Activated naive CD8-positive, alpha-beta T cell treated with anti-CD3 and anti-CD28 coated beads, Interleukin-2, amount 10 ng/mL, durations not matched to agents 7 days and 5 days (primary cell): ENCODE measurements at regions of chr7 and their contacts with region 1.

Region 1: GRCh38 chr7:100705753-100706671 is at the start of gene POP7:
- DNase-seq: peak; percentile 99
- ATAC-seq: peak; percentile 94
- H3K4me3 Mint-ChIP-seq: peak within 1 kb of the TSS; percentile 99
- H3K27ac Mint-ChIP-seq: peak within 1 kb of the TSS; percentile 98
- H3K4me1 Mint-ChIP-seq: peaks cover 10% of the 10 kb centered on the region
- H3K27me3 Mint-ChIP-seq: peaks cover 2% of the 10 kb centered on the region
- total RNA-seq, gene POP7: 29.6 to 32.8 TPM

Region 2: DNA sequence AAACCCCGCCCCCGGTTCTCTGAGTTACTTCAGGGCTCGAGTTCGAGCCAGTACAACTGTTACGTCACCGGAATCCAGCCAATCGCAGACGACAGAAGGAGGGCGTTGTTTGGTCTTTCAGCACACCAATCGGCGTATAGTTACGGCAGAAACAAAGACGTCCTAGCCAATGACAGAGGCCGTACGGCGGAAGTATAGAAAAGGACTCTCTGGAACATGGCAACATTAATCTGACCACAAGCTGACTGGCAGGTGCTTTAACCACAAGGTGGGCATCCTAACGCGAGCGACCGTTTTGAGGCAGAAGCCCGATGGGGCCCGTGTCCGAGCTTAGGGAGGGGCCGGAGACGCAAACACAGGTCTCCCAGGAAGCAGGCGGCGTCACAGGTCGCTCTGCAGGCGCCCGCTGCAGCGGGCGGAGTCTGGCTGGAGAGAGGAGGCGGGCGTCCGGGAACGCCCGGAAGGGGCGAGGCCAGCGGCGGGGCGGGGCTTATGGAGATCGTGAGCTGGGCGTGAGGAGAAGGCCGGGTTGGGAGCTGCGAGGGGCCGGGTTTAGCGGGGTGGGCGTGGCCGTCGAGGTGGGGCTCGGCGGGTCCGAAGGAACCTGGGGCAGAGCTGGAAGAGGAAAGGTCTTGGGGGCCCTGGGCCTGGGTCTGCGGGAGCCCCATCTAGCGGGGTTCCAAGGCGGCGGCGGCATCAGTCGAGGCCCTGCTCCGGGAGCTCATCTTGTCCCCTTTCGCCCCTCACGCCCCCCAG is 93.9 kb before region 1 on chr7 and contains the start of gene MOSPD3:
- POLR2A ChIA-PET with region 1: interaction called, 19 read pairs
- DNase-seq: peak; percentile 100
- ATAC-seq: peak; percentile 93
- H3K4me3 Mint-ChIP-seq: peak within 1 kb of the TSS; percentile 98
- H3K27ac Mint-ChIP-seq: peak within 1 kb of the TSS; percentile 100
- H3K4me1 Mint-ChIP-seq: peaks cover 19% of the 10 kb centered on the region
- H3K27me3 Mint-ChIP-seq: peaks cover 7% of the 10 kb centered on the region
- total RNA-seq, gene MOSPD3: 27.4 TPM

Region 3: GRCh38 chr7:100632951-100633717 is 72.9 kb before region 1 on chr7:
- POLR2A ChIA-PET with region 1: interaction called, 13 read pairs
- DNase-seq: peak; percentile 73
- ATAC-seq: peak; percentile 71
- H3K4me3 Mint-ChIP-seq: peak overlapping the region; percentile 87
- H3K27ac Mint-ChIP-seq: peak overlapping the region; percentile 87
- H3K4me1 Mint-ChIP-seq: peaks cover 31% of the 10 kb centered on the region
- H3K27me3 Mint-ChIP-seq: peaks cover 12% of the 10 kb centered on the region

Region 4: DNA sequence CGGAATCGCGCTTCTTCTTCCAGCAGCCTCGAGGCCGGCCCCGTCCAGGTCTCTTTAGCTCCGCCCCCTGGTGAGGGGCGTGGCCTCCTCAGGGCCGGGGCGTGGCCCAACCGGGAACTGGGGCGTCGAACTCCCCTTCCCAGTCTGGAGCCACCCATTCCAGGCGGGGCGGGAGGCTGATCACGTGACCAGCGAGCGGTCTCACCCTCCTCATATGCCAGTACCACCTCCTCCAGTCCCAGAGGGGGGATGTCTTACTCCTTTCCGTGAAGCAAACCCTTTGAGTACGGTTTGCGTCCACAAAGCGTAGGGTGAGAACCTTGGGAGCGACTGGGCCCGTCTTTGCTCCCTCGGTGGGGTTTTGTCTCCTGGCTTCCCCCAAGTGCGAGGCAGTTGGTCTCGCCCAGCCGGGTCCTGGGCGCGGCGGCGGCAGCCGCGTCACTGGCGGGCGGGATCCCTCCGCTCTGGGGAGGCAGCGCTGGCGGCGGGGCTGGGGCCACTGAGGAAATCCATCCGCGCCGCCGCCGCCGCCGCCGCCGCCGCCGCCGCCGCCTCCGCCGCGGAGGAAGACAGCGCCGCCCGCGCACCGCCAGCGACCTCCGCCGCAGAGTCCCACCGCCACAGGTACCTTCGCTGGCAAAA is 32.6 kb before region 1 on chr7 and contains the start of gene GNB2:
- POLR2A ChIA-PET with region 1: interaction called, 10 read pairs
- DNase-seq: peak; percentile 100
- ATAC-seq: peak; percentile 64
- H3K4me3 Mint-ChIP-seq: peak within 1 kb of the TSS; percentile 98
- H3K27ac Mint-ChIP-seq: peak within 1 kb of the TSS; percentile 95
- H3K4me1 Mint-ChIP-seq: peaks cover 16% of the 10 kb centered on the region
- H3K27me3 Mint-ChIP-seq: peaks cover 7% of the 10 kb centered on the region
- total RNA-seq, gene GNB2: 203 to 216 TPM

Region 5: GRCh38 chr7:100691676-100692577 is 14.1 kb before region 1 on chr7:
- POLR2A ChIA-PET with region 1: interaction called, 31 read pairs
- DNase-seq: peak; percentile 82
- ATAC-seq: peak; percentile 74
- H3K4me3 Mint-ChIP-seq: peak overlapping the region; percentile 96
- H3K27ac Mint-ChIP-seq: peak overlapping the region; percentile 34
- H3K4me1 Mint-ChIP-seq: peaks cover 24% of the 10 kb centered on the region
- H3K27me3 Mint-ChIP-seq: peaks cover 9% of the 10 kb centered on the region

Region 6: GRCh38 chr7:100852048-100852872 is 146.2 kb after region 1 on chr7 and contains the start of gene SLC12A9:
- POLR2A ChIA-PET with region 1: interaction called, 26 read pairs
- DNase-seq: peak; percentile 94
- ATAC-seq: peak; percentile 98
- H3K4me3 Mint-ChIP-seq: peak within 1 kb of the TSS; percentile 94
- H3K27ac Mint-ChIP-seq: peak within 1 kb of the TSS; percentile 80
- H3K4me1 Mint-ChIP-seq: peaks cover 10% of the 10 kb centered on the region
- H3K27me3 Mint-ChIP-seq: no peaks in the 10 kb centered on the region
- total RNA-seq, gene SLC12A9: 39.0 to 41.2 TPM

Region 7: DNA sequence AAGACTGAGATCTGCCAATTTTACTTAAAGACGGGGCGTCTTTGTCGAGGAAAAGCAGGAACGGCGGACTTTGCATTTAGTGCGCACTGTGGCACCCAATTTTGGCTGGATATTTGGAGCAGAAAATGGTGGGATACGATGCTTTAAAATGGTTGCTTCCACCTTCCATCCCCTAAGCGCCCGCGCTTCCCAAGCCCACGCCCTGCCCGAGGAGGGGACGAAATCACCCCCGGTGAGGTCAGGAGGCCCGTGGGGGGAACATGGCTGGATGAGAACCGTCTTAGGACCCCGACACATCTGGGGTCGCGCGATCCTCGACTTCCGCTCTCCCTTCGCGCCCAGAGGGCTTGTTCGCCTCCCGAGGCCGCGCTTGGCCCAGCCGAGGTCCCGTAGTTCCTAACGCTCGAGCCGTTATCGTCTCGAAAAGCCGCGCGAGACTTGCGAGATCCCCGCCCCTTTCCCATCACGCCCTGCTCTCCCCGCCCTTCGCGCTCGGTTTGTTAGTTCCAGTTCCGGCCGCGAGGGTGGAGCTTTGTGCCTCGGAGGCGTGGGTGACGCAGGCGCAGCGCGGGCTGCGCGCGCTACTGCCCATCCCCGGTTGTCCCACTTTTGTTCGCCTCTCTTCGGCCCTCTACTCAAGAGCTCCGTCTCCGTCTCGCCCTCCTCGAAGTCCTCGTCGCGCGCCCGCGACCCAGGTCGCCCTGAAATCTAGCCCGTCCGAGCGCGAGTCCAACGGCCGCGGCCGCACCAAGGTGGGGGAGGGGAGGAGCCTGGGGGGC is 168.8 kb after region 1 on chr7 and contains the start of gene SRRT:
- POLR2A ChIA-PET with region 1: interaction called, 11 read pairs
- DNase-seq: peak; percentile 97
- ATAC-seq: peak; percentile 93
- H3K4me3 Mint-ChIP-seq: peak within 1 kb of the TSS; percentile 97
- H3K27ac Mint-ChIP-seq: peak within 1 kb of the TSS; percentile 98
- H3K4me1 Mint-ChIP-seq: peaks cover 41% of the 10 kb centered on the region
- H3K27me3 Mint-ChIP-seq: no peaks in the 10 kb centered on the region
- total RNA-seq, gene SRRT: 251 to 255 TPM